Activated B cell treated with CpG ODN at 0.5 μM for 24 hours (primary cell): ENCODE measurements at regions of chr7 and their contacts with region 1.

Region 1: GRCh38 chr7:121337398-121337797 is 8.6 kb downstream of the WNT16 start:
- DNase-seq: no peak
- ATAC-seq: peak; percentile 72
- H3K4me3 Mint-ChIP-seq: no peak overlapping the region
- H3K27ac Mint-ChIP-seq: peak overlapping the region; percentile 41
- H3K4me1 Mint-ChIP-seq: peaks cover 9% of the 10 kb centered on the region
- H3K27me3 Mint-ChIP-seq: no peaks in the 10 kb centered on the region
- CTCF ChIP-seq: no peak

Region 2: GRCh38 chr7:120792091-120792860 is 545.1 kb before region 1 on chr7:
- CTCF ChIA-PET with region 1: interaction called, 3 read pairs
- POLR2A ChIA-PET with region 1: no interaction called
- intact Hi-C with region 1: loop called (anchors 5 kb)
- DNase-seq: peak; percentile 50
- ATAC-seq: peak; percentile 73
- H3K4me3 Mint-ChIP-seq: no peak overlapping the region
- H3K27ac Mint-ChIP-seq: no peak overlapping the region
- H3K4me1 Mint-ChIP-seq: no peaks in the 10 kb centered on the region
- H3K27me3 Mint-ChIP-seq: peaks cover 2% of the 10 kb centered on the region
- CTCF ChIP-seq: peak; percentile 74

Region 3: DNA sequence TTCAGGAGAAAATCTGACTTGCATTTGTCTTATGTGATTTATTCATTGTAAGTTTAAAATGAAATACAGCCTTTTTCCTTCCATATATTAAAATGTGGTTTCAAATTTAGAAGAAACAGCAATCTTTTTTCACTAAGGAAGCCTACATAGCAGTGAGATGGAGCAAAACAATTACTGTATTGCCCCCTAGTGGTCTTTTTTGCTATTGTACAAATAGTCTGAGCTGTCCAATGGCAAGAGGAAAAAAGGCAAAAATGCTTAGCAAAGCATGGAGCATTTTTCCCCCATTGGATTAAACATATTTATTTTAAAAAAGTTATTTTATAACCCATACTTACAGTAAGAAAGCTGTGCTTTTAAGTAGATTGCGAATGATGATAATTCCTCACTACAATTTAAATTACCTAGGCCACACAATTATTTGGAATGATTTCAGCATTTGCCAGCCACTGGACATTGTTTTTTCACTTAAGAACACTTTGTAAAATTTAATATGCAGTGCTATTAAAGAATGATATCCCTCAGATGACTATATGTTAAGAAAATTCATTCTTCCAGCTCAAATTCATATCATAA is 229.4 kb before region 1 on chr7:
- CTCF ChIA-PET with region 1: interaction called, 10 read pairs
- POLR2A ChIA-PET with region 1: interaction called, 3 read pairs
- intact Hi-C with region 1: no loop called
- DNase-seq: no peak
- ATAC-seq: peak; percentile 77
- H3K4me3 Mint-ChIP-seq: no peak overlapping the region
- H3K27ac Mint-ChIP-seq: no peak overlapping the region
- H3K4me1 Mint-ChIP-seq: no peaks in the 10 kb centered on the region
- H3K27me3 Mint-ChIP-seq: no peaks in the 10 kb centered on the region
- CTCF ChIP-seq: peak; percentile 83

Region 4: GRCh38 chr7:121126801-121127534 is 210.4 kb before region 1 on chr7:
- CTCF ChIA-PET with region 1: interaction called, 30 read pairs
- POLR2A ChIA-PET with region 1: no interaction called
- intact Hi-C with region 1: loop called (anchors 1 kb)
- DNase-seq: no peak
- ATAC-seq: no peak
- H3K4me3 Mint-ChIP-seq: no peak overlapping the region
- H3K27ac Mint-ChIP-seq: no peak overlapping the region
- H3K4me1 Mint-ChIP-seq: peaks cover 18% of the 10 kb centered on the region
- H3K27me3 Mint-ChIP-seq: no peaks in the 10 kb centered on the region
- CTCF ChIP-seq: no peak

Region 5: DNA sequence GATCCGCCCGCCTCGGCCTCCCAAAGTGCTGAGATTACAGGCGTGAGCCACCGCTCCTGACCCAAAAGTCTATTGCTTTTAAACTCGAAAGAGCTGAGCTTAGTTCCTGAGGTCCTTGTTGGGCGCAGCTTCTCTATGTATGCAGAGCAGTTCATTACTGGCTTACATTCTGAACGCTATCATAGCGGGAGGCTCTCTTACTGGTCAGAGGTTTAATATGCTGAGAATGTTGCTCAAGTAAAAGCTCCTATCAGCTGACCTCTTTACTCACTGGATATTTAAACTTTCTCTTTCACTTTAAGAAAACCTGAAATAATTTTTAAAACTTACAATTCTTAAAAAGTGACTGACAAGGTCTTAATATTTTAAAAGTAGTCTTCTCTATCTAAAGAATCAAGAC is 169.4 kb before region 1 on chr7:
- CTCF ChIA-PET with region 1: interaction called, 15 read pairs
- POLR2A ChIA-PET with region 1: no interaction called
- intact Hi-C with region 1: loop called (anchors 1 kb)
- DNase-seq: no peak
- ATAC-seq: no peak
- H3K4me3 Mint-ChIP-seq: no peak overlapping the region
- H3K27ac Mint-ChIP-seq: no peak overlapping the region
- H3K4me1 Mint-ChIP-seq: peaks cover 44% of the 10 kb centered on the region
- H3K27me3 Mint-ChIP-seq: no peaks in the 10 kb centered on the region
- CTCF ChIP-seq: no peak

Region 6: GRCh38 chr7:121235201-121235600 is 102.2 kb before region 1 on chr7:
- CTCF ChIA-PET with region 1: no interaction called
- POLR2A ChIA-PET with region 1: no interaction called
- intact Hi-C with region 1: no loop called
- DNase-seq: no peak
- ATAC-seq: no peak
- H3K4me3 Mint-ChIP-seq: no peak overlapping the region
- H3K27ac Mint-ChIP-seq: no peak overlapping the region
- H3K4me1 Mint-ChIP-seq: no peaks in the 10 kb centered on the region
- H3K27me3 Mint-ChIP-seq: no peaks in the 10 kb centered on the region
- CTCF ChIP-seq: no peak

Region 7: GRCh38 chr7:121360564-121360963 is 23.2 kb after region 1 on chr7:
- CTCF ChIA-PET with region 1: no interaction called
- POLR2A ChIA-PET with region 1: no interaction called
- intact Hi-C with region 1: loop called (anchors 2 kb)
- DNase-seq: no peak
- ATAC-seq: no peak
- H3K4me3 Mint-ChIP-seq: no peak overlapping the region
- H3K27ac Mint-ChIP-seq: no peak overlapping the region
- H3K4me1 Mint-ChIP-seq: no peaks in the 10 kb centered on the region
- H3K27me3 Mint-ChIP-seq: no peaks in the 10 kb centered on the region
- CTCF ChIP-seq: no peak